ENCODE measurements at regions of chr13 and their contacts with region 1.

Region 1: GRCh38 chr13:52677823-52678222 is 25.2 kb downstream of the SUGT1 start:
- DNase-seq: no peak
- H3K4me3 ChIP-seq: no peak overlapping the region
- H3K27ac ChIP-seq: no peak overlapping the region
- H3K4me1 ChIP-seq: no peaks in the 10 kb centered on the region
- H3K27me3 ChIP-seq: no peaks in the 10 kb centered on the region
- CTCF ChIP-seq: no peak

Region 2: DNA sequence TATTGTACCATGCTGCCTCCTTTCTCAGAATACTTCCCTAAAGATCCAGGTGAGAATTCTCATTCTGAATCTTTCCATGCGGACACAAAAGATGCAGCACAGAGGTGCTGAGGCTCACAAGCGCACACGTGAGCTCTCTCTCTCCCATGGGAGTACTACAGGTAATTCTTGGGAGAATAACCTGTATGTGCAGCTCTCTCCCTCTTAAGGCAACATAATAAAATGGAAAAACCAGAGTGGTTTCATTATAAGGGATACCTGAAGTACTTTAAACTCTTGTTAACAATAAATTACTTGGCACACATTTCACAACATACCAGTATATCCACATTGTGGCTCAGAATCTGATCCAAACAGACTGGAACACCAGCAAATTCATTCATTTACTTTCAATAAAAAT is 1265.4 kb before region 1 on chr13:
- CTCF ChIA-PET with region 1: no interaction called
- POLR2A ChIA-PET with region 1: interaction called, 17 read pairs
- intact Hi-C with region 1: no loop called
- DNase-seq: no peak
- H3K4me3 ChIP-seq: no peak overlapping the region
- H3K27ac ChIP-seq: no peak overlapping the region
- H3K4me1 ChIP-seq: no peaks in the 10 kb centered on the region
- H3K27me3 ChIP-seq: no peaks in the 10 kb centered on the region
- CTCF ChIP-seq: no peak

Region 3: DNA sequence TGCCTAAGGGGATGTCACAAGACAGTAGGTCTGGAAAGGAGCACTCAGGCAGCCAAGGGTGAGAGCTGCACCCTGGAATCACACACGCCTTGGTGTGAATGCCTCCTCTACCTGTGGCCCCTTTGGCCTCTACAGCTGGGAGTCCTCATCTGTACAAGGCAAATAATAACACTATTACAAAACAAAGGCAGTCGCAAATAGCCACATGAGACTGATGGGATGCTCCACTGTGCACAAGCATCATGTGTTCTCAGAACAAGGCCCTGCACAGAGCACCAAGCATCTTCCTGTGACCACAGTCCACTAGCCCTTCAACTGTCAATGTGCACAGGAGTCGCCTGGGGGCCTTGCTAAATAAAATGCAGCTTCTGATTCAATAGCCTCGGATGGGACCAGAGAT is 80.1 kb before region 1 on chr13:
- CTCF ChIA-PET with region 1: no interaction called
- POLR2A ChIA-PET with region 1: no interaction called
- intact Hi-C with region 1: no loop called
- DNase-seq: no peak
- H3K4me3 ChIP-seq: no peak overlapping the region
- H3K27ac ChIP-seq: no peak overlapping the region
- H3K4me1 ChIP-seq: no peaks in the 10 kb centered on the region
- H3K27me3 ChIP-seq: no peaks in the 10 kb centered on the region
- CTCF ChIP-seq: no peak

Region 4: DNA sequence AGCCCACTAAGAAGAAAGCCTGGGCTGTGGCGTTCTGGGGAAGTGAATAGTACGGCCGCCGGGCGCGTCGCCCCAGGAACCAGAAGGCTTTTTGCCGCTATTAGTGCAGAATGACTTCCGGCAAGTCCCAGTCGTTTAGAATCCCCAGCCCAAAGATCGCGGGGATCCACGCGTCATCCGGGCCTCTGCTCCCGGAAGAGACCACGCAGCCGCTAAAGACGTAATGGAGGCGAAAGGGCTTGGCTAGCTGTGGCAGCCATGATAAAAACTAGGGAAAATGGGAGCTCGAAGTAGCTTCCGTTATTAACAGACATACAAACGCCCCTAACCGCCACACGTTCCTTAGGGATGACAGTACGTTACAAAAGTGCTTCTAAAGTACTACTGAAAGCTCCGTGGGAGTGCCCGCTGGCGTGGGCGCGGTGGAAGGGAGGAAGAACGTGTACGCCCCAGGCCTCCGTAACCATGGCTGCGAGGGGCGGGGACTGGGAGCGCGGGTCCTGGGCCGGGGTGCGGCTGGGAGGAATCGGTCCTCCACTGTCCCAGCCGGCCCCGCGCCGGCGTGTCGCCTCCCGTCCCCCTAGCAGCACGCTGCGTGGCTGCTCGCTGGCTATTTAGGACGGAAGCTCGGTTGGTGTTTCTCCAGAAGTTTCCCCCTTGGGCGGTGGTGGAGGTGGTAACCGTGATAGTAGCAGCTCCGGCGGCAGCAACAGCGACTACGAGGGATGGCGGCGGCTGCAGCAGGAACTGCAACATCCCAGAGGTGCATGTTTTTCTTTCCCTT is 25.4 kb before region 1 on chr13 and contains the start of gene SUGT1:
- CTCF ChIA-PET with region 1: no interaction called
- POLR2A ChIA-PET with region 1: no interaction called
- intact Hi-C with region 1: no loop called
- DNase-seq: peak; percentile 94 to 97
- H3K4me3 ChIP-seq: peak within 1 kb of the TSS; percentile 86
- H3K27ac ChIP-seq: peak within 1 kb of the TSS; percentile 93
- H3K4me1 ChIP-seq: peaks cover 23% of the 10 kb centered on the region
- H3K27me3 ChIP-seq: no peaks in the 10 kb centered on the region
- CTCF ChIP-seq: no peak; the same call in 1 of the 2 replicates
- total RNA-seq, gene SUGT1: 48.8 and 57.2 TPM in 2 replicates